ENCODE measurements at regions of chr12 and their contacts with region 1.

Region 1: GRCh38 chr12:62435303-62436163 is 31.1 kb upstream of the MON2 start:
- DNase-seq: no peak
- H3K4me3 ChIP-seq: peak overlapping the region; percentile 62
- CTCF ChIP-seq: peak; percentile 74

Region 2: DNA sequence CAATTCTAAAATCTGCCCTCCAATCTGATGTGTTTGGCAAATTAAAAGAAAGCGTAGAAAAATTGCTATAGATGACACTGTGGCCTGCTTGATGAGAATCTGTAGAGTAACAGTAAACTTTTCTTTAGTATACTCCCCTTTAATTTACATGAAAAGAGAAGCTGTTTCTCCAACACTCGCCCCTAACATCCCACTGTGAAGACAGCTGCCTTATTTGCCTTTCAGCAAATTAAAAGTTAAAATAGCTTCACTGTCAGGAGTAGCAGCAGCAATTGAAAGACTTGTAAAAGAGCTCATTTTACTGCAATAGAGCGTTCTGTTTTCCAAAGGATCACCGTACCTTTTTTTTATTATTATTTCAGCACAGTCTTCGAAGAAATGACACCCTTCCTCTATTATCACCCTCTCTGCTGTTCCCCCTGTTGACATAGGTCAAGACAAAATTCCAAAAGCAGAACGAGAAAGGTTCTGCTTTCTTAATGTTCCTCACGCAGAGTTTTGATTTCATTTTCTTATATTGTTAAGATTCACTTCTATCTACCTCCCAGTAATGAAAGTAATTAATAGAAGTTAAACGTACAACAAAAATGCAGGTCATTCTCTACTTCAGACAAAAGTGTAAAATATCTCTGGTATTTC is 328.9 kb before region 1 on chr12:
- CTCF ChIA-PET with region 1: no interaction called
- POLR2A ChIA-PET with region 1: no interaction called
- DNase-seq: no peak
- H3K4me3 ChIP-seq: no peak overlapping the region
- CTCF ChIP-seq: no peak

Region 3: DNA sequence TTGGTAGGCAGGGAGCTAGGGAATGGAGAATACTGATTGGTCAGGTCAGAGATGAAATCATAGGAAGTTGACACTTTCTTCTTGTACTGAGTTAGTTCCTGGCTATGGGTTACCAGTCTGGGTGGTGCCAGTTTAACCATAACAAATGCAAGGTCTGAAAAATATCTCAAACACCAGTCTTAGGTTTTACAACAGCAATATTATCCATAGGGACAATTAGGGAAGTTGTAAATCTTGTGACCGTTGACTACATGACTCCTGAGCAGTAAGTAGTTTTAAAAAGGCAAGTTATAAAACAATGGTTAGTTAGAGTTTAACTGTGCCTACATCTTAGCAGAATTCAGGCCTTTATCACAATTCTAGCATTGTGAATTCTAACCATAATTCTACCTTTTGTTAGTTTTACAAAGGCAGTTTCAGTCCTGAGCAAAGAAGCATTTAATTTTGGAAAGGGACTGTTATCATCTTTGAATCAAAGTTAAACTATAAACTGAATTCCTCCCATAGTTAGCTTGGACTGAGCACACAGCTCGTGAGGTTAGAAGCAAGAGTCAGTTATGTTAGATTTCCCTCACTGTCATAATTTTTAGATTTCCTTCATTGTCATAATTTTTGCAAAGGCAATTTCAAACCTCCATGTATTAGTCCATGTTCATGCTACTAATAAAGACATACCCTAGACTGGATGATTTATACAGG is 11.4 kb after region 1 on chr12:
- CTCF ChIA-PET with region 1: interaction called, 66 read pairs
- POLR2A ChIA-PET with region 1: no interaction called
- DNase-seq: no peak
- H3K4me3 ChIP-seq: no peak overlapping the region
- CTCF ChIP-seq: no peak

Region 4: DNA sequence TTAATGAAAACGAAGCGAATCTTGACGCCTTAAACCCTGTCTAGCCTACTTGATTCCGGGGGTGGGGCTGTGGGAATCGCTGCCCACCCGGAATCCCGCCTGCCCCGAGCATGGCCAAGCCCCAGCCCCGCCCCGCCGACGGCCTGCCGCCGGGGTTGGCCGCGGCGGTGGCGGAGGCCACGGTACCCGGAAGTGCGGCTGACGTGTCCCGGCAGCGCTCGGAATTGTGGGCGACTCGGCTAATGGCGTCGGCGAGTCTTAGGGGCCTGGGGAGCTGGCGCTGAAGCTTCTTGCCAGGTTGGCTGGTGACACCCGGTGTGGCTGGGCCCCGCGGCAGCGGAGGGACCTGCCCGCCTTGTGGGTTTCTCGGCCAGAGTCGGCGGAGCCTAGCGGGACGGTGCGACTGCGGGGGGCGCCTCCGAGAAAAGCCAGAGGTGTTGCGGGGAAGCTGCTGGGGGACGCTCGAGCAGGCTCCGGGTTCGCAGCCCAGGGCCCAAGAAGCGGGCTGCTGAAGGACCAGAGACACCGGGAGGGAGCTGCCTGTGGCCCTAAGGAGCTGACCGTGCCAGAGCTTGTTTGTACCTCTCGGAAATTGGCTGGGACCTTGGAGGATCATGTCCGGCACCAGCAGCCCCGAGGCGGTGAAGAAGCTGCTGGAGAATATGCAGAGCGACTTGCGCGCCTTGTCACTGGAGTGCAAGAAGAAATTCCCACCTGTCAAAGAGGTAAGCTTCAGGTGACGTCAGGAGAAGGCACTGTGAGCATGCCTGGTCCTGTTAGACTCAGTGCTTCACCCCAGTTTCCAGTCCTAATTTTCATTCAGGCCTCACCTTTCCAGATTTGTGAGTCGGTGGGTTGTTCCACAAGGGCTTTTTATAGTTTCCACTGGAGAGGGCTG is 31.3 kb after region 1 on chr12 and contains the start of gene MON2:
- CTCF ChIA-PET with region 1: interaction called, 30 read pairs
- POLR2A ChIA-PET with region 1: no interaction called
- DNase-seq: no peak
- H3K4me3 ChIP-seq: peak within 1 kb of the TSS; percentile 96
- CTCF ChIP-seq: no peak

Region 5: GRCh38 chr12:62799126-62799736 is 363.7 kb after region 1 on chr12:
- CTCF ChIA-PET with region 1: interaction called, 229 read pairs
- POLR2A ChIA-PET with region 1: no interaction called
- DNase-seq: no peak
- H3K4me3 ChIP-seq: no peak overlapping the region
- CTCF ChIP-seq: peak; percentile 82

Measured in AG04449 (cell line).